Activated naive CD4-positive, alpha-beta T cell treated with anti-CD3 and anti-CD28 coated beads for 36 hours (primary cell): ENCODE measurements at regions of chr4 and their contacts with region 1.

Region 1: GRCh38 chr4:1746265-1746691 is 25.0 kb downstream of the TACC3 start:
- DNase-seq: peak; percentile 81
- H3K4me3 Mint-ChIP-seq: no peak overlapping the region
- H3K27ac Mint-ChIP-seq: no peak overlapping the region
- H3K4me1 Mint-ChIP-seq: no peaks in the 10 kb centered on the region
- H3K27me3 Mint-ChIP-seq: no peaks in the 10 kb centered on the region

Region 2: DNA sequence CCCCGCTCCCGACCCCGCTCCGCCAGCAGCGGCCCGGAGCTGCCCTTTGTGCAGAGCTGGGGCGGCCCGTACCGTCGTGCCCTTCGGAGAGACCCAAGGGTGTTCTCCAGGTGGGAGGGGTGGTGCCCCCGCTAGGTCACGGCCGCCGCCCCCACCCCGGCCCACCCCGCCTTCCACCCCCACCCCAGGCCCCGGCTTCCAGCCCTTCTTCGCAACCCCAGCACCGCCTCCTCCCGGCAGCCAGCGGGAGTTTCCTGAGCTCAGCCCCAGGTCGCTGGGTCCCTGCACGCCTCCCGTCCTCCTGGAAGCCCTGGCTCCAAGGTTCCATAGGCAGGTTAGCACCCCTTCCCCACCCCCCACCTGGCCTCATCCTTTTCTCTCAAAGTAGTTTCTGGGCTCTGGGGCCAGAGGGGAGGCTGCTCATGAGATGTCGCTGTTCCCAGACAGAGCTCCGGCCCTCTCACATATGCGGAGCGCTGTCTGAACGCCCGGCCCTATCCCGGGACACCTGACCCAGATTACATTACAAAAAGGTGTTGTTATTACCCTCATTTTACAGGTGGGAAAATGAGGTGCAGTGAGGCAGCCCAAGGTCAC is 21.6 kb after region 1 on chr4:
- CTCF ChIA-PET with region 1: interaction called, 11 read pairs
- intact Hi-C with region 1: loop called (anchors 1 kb)
- DNase-seq: peak; percentile 53
- H3K4me3 Mint-ChIP-seq: peak overlapping the region; percentile 24
- H3K27ac Mint-ChIP-seq: no peak overlapping the region
- H3K4me1 Mint-ChIP-seq: peaks cover 5% of the 10 kb centered on the region
- H3K27me3 Mint-ChIP-seq: peaks cover 13% of the 10 kb centered on the region

Region 3: DNA sequence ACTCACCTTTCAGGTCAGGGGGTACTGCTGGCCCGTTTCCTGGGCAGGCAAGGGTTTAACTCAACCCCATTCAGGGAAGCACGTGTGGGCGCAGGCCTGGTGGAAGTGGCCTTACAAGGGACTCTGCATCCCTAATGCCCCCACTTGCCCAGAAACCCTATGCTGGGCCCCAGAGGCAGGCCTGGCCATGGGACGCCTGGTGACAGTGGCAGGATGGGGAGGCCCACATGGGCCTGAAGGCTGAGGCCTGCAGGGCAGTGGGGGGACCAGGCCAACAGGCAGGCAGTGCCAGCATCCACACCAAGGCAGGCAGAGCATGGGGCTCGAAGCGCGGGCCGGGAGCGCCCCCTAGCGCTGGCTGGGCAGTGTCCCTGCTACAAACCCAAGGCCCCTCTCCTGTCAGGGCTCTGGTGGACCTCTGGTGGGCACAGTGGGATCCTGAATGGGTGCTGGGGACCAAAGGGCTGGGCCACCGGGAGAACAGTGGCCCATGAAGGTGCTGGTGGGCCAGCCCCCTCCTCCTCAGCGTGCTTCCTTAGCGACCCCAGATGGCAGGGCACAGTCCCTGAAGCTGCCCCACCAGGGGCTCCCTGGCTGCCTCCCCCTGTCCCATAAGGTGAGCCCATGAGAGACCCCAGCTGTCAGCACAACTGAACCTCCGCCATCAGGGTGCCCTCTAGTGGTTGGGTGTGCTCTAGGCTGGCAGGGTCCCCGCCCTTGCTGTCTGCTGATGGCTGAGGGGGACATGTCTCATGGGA is 63.7 kb after region 1 on chr4:
- CTCF ChIA-PET with region 1: interaction called, 55 read pairs
- intact Hi-C with region 1: loop called (anchors 1 kb)
- DNase-seq: peak; percentile 84
- H3K4me3 Mint-ChIP-seq: no peak overlapping the region
- H3K27ac Mint-ChIP-seq: no peak overlapping the region
- H3K4me1 Mint-ChIP-seq: no peaks in the 10 kb centered on the region
- H3K27me3 Mint-ChIP-seq: no peaks in the 10 kb centered on the region